ENCODE measurements at regions of chr20 and their contacts with region 1.

Region 1: DNA sequence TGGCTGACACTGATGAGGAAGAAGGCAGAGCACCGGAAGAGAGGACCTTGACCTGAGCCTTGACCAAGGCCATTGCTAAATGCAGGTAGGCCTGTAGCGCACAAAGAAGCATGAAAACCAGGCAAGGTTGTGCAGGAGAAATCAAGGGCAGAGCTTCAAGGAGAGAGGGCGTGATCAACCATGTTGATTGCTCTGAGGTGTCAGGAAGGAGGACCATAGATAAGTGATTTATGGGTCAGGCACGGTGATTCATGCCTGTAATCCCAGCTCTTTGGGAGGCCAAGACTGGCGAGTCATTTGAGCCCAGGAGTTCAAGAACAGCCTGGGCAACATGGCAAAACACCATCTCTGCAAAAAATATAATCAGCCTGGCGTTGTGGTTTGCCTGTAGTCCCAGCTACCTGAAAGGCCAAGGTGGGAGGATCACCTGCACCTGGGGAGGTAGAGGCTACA is 12.4 kb downstream of the PLCG1 start:
- DNase-seq: peak; percentile 39 to 80 (median 58)
- ATAC-seq: peak; percentile 79
- H3K4me3 ChIP-seq: no peak overlapping the region
- H3K27ac ChIP-seq: no peak overlapping the region
- H3K4me1 ChIP-seq: peaks cover 4 to 23% of the 10 kb centered on the region in 2 experiments; a peak in 4 of 5 replicates
- H3K27me3 ChIP-seq: no peaks in the 10 kb centered on the region
- CTCF ChIP-seq: no peak
- EP300 ChIP-seq: peak; percentile 37; the same call in 1 of the 2 replicates
- POLR2A ChIP-seq: no peak
- RAD21 ChIP-seq: no peak

Region 2: DNA sequence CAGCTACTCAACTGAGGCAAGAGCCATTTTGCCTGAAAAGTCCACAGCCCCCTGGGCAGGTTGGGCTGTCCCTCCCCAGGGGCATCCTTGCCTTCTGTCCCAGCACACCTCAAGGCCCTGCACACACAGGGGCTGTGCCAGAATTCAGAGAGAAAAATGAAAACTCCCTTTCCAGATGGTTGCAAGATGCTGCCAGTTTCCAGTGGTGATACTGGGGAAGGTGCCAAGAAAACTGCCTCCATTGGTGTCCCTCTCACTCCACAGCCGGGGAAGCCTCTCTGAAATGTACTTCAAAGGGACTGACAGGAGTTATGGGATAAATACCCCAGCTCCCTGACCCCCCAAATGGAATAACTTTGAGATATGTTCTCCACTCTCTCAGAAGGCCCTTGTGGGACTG is 306.5 kb before region 1 on chr20:
- CTCF ChIA-PET with region 1: no interaction called
- POLR2A ChIA-PET with region 1: no interaction called
- in situ Hi-C with region 1: no loop called
- intact Hi-C with region 1: no loop called
- DNase-seq: no peak
- ATAC-seq: no peak
- H3K4me3 ChIP-seq: no peak overlapping the region
- H3K27ac ChIP-seq: no peak overlapping the region
- H3K4me1 ChIP-seq: no peaks in the 10 kb centered on the region
- H3K27me3 ChIP-seq: peaks cover 0 to 3% of the 10 kb centered on the region in 2 experiments; a peak in 1 of 5 replicates
- CTCF ChIP-seq: no peak
- EP300 ChIP-seq: no peak
- POLR2A ChIP-seq: no peak
- RAD21 ChIP-seq: no peak

Region 3: GRCh38 chr20:41136680-41137613 is 12.8 kb before region 1 on chr20 and contains the start of gene PLCG1:
- CTCF ChIA-PET with region 1: no interaction called
- POLR2A ChIA-PET with region 1: interaction called, 12 read pairs
- in situ Hi-C with region 1: no loop called
- intact Hi-C with region 1: no loop called
- DNase-seq: peak; percentile 91 to 98 (median 98)
- ATAC-seq: peak; percentile 86
- H3K4me3 ChIP-seq: peak within 1 kb of the TSS; percentile 74
- H3K27ac ChIP-seq: peak within 1 kb of the TSS; percentile 86
- H3K4me1 ChIP-seq: peaks cover 33 to 47% of the 10 kb centered on the region in 2 experiments; a peak in 4 of 5 replicates
- H3K27me3 ChIP-seq: no peaks in the 10 kb centered on the region
- CTCF ChIP-seq: no peak
- EP300 ChIP-seq: no peak
- POLR2A ChIP-seq: peak; percentile 78
- RAD21 ChIP-seq: no peak
- polyA plus RNA-seq, gene PLCG1: 1.7 to 2.2 TPM

Region 4: DNA sequence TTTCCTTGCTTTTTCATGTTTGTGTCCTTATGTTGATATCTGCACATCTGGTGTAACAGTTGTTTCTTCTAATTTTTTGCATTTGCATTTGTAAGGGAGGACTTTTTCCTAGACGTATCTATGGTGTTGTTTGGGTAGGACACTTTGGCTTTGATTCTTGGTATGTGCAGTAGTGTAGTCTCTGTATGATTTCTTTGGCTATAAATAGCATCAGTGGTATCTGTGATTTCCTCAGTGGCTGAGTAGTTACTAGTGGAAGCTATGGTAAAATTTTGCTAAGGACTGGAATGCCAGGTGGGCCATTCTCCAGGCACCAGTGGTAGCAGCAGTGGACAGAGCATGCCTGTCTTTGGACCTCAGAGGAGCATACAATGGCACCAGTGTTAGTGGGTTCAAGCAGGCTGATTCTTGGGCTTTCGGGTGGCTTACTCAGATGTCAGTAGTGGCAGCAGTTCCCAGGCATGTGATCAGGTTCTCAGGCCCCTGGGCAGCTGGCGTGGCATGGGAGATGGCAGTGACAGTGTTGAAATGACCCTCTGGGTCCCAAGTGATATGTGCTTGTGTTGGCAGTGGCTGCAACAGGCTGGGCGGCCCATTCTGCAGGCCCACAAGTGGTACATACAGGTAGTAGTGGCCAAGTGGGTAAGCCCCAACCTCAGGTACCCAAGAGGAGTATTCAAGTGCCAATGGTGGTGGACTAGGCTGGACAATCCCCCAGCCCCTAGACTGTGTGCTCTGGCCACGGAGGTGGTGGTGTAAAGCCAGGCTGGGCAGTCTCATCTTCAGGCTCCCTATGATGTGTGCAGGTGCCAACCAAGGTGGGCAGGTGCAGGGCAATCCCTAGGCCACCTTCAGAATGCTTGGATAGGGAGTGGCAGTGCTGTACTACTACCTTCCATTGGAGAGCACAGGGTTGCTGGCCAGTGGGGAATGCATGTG is 42.1 kb after region 1 on chr20:
- CTCF ChIA-PET with region 1: no interaction called
- POLR2A ChIA-PET with region 1: no interaction called
- in situ Hi-C with region 1: no loop called
- intact Hi-C with region 1: loop called (anchors 1 kb)
- DNase-seq: no peak
- ATAC-seq: no peak
- H3K4me3 ChIP-seq: no peak overlapping the region
- H3K27ac ChIP-seq: no peak overlapping the region; the same call in 2 of the 3 replicates
- H3K4me1 ChIP-seq: no peaks in the 10 kb centered on the region
- H3K27me3 ChIP-seq: no peaks in the 10 kb centered on the region
- CTCF ChIP-seq: no peak
- EP300 ChIP-seq: no peak
- POLR2A ChIP-seq: no peak
- RAD21 ChIP-seq: no peak

Region 5: DNA sequence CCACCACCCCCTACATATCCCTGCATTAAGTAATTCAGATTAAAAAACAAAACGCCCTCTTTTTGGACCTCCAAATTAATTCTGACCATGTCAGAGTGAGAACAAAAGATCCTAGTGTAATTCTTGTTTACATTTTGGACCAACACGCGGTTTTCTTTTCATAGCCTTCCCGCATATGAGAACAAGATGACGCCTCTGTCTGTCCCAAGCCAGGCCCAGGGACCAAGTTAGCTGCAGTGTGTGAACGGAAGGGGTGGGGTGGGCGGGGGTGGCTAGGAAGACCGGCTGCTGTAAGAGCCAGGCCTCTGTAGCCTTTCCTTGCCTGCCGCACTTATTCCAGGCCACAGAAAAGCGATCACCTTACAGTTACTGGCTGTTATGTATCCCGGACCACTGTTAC is 55.6 kb after region 1 on chr20:
- CTCF ChIA-PET with region 1: no interaction called
- POLR2A ChIA-PET with region 1: no interaction called
- in situ Hi-C with region 1: no loop called
- intact Hi-C with region 1: no loop called
- DNase-seq: no peak
- ATAC-seq: no peak
- H3K4me3 ChIP-seq: no peak overlapping the region
- H3K27ac ChIP-seq: no peak overlapping the region
- H3K4me1 ChIP-seq: no peaks in the 10 kb centered on the region
- H3K27me3 ChIP-seq: no peaks in the 10 kb centered on the region
- CTCF ChIP-seq: no peak
- EP300 ChIP-seq: no peak
- POLR2A ChIP-seq: no peak
- RAD21 ChIP-seq: no peak